ENCODE measurements at regions of chr17 and their contacts with region 1.

Region 1: GRCh38 chr17:44775136-44775837 is 16.5 kb downstream of the ADAM11 start:
- DNase-seq: peak; percentile 91 to 100 (median 96)
- H3K4me3 ChIP-seq: peak overlapping the region; percentile 32 to 90 (median 68)
- H3K27ac ChIP-seq: peak overlapping the region in 33 of 59 donors; percentile 1 to 76 (median 51)
- H3K27me3 ChIP-seq: no peaks in the 10 kb centered on the region
- CTCF ChIP-seq: peak in 31 of 56 donors; percentile 2 to 56 (median 19)

Region 2: GRCh38 chr17:44864866-44865660 is 89.8 kb after region 1 on chr17:
- intact Hi-C with region 1: loop called (anchors 1 to 5 kb)
- DNase-seq: peak; percentile 30 to 81 (median 56)
- H3K4me3 ChIP-seq: no peak overlapping the region
- H3K27ac ChIP-seq: peak overlapping the region in 6 of 59 donors; percentile 5 to 52 (median 20)
- H3K27me3 ChIP-seq: no peaks in the 10 kb centered on the region
- CTCF ChIP-seq: peak; percentile 74 to 95 (median 90)